Dorsolateral prefrontal cortex (tissue), 120 donors: ENCODE measurements at regions of chr11 and their contacts with region 1.

Region 1: DNA sequence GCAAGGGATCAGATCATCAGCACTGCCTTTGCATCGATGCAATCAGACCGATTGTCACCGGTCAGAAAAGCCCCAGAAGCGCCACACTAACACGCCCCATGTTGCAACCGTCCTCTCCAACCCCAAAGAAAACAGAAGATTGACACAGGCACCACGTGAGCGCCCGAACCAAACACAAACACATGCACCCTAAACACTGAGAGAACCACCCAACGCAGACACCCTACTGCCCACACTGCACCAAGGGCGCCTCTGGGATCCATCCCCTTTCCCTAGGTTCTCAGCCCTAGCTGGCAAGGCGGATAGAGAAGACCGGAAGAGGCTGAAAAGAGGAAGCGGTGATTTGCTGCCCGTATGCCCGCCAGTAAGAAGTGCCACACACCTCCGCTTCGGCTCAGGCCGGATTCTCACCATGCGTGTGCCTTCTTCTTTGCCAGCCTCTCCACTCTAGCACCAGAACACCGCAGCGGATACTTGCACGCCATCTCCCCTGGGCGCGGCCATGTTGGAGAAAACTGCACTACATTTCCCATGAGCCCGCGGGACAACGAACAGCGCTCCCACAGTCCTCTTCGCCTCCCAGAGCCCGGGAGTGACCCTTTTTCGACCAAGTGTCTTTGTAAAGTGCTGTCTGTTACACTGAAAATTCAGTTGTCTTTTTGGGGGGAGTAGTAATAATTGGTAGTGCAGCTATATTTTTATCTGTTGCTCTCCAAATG is at the start of gene ALKBH8:
- DNase-seq: peak; percentile 73 to 88 (median 84)
- H3K4me3 ChIP-seq: peak within 1 kb of the TSS; percentile 62 to 99 (median 85)
- H3K27ac ChIP-seq: peak within 1 kb of the TSS; percentile 10 to 95 (median 83)
- H3K27me3 ChIP-seq: peaks cover 0 to 6% (median 0%) of the 10 kb centered on the region in 45 donors
- CTCF ChIP-seq: peak in 41 of 56 donors; percentile 3 to 62 (median 37)
- total RNA-seq, gene ALKBH8: 2.9 to 14.5 (median 8.3) TPM

Region 2: DNA sequence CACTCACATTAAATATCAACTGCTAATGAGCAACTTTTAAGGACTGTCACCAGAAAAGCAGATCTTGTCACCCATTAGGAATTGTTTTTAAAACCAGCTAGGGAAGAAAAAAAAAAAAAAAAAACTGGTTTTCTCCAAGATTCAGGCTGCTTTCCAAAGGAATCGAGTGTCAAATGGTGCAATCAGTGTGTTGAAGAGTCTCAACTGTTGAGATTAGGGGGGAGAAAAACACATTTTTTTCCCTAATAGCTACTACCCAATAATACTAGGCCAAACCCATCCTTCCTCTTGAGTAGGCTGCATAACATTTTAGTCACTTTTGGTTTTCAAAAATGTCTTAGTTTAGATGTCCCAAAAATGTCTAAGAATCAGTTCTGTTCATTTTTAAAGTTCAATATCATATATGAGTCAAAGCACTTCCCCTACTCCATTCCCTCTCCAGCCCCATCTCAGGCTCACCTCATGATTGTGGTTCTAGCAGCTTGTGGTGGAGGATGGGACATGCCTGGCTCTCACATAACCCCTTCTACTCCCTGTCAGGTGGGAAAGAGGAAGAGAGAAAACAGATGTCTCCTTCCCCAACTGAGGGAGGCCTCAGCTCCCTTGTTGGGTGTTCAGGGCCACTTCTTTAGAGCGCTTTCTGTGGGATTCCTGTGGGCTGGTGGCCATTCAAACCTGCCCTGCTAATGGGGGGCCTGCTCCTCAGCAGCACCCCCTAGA is 301.4 kb before region 1 on chr11:
- intact Hi-C with region 1: no loop called
- DNase-seq: no peak
- H3K4me3 ChIP-seq: no peak overlapping the region
- H3K27ac ChIP-seq: peak overlapping the region in 10 of 59 donors; percentile 0 to 57 (median 40)
- H3K27me3 ChIP-seq: no peaks in the 10 kb centered on the region
- CTCF ChIP-seq: no peak

Region 3: GRCh38 chr11:107457558-107458271 is 107.7 kb before region 1 on chr11 and contains the start of gene CWF19L2:
- intact Hi-C with region 1: loop called in 1 of 2 experiments (anchors 5 kb)
- DNase-seq: peak; percentile 78 to 91 (median 87)
- H3K4me3 ChIP-seq: peak within 1 kb of the TSS; percentile 51 to 98 (median 85)
- H3K27ac ChIP-seq: peak within 1 kb of the TSS in 57 of 59 donors; percentile 42 to 92 (median 77)
- H3K27me3 ChIP-seq: no peaks in the 10 kb centered on the region
- CTCF ChIP-seq: peak in 48 of 56 donors; percentile 2 to 62 (median 39)
- total RNA-seq, gene CWF19L2: 19.6 to 32.2 (median 25.3) TPM